Posterior vena cava (tissue), 2 donors: ENCODE measurements at regions of chr2 and their contacts with region 1.

Region 1: GRCh38 chr2:185316383-185316782 is 422.2 kb upstream of the FSIP2 start:
- DNase-seq: no peak

Region 2: DNA sequence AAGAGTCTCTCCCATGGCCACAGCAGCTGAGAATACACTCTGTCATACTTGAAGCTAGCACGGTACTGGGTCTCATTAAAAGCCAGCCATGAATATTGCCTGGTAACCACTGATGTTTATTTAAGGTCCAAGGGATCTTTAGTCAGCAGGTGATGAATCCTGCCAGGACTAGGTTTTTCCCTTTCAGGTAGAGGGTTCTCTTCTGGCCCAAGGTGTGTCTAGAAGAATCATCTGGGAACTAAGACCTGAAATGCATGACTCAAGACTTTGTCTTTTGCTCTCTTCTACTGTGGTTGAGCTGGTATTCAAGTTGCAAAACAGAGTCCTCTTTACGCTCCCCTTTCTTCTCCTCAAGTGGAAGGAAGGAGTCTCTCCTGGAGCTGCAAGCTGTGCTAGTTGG is 21.7 kb after region 1 on chr2:
- intact Hi-C with region 1: no loop called
- DNase-seq: no peak

Region 3: GRCh38 chr2:186440537-186440936 is 1124.2 kb after region 1 on chr2:
- intact Hi-C with region 1: loop called in 1 of 2 experiments (anchors 10 kb)
- DNase-seq: no peak